Activated naive CD4-positive, alpha-beta T cell treated with anti-CD3 and anti-CD28 coated beads, Interleukin-2, amount 10 ng/mL, durations not matched to agents 7 days and 5 days (primary cell): ENCODE measurements at regions of chr19 and their contacts with region 1.

Region 1: GRCh38 chr19:917323-918151 is at the start of gene KISS1R:
- DNase-seq: peak; percentile 53
- H3K4me3 Mint-ChIP-seq: peak within 1 kb of the TSS; percentile 61
- H3K27ac Mint-ChIP-seq: peak within 1 kb of the TSS; percentile 68
- H3K4me1 Mint-ChIP-seq: peaks cover 30% of the 10 kb centered on the region
- H3K27me3 Mint-ChIP-seq: peaks cover 48% of the 10 kb centered on the region

Region 2: GRCh38 chr19:861763-862580 is 55.6 kb before region 1 on chr19:
- CTCF ChIA-PET with region 1: interaction called, 24 read pairs
- DNase-seq: peak; percentile 81
- H3K4me3 Mint-ChIP-seq: peak overlapping the region; percentile 57
- H3K27ac Mint-ChIP-seq: no peak overlapping the region
- H3K4me1 Mint-ChIP-seq: peaks cover 32% of the 10 kb centered on the region
- H3K27me3 Mint-ChIP-seq: peaks cover 46% of the 10 kb centered on the region